ENCODE measurements at regions of chr10 and their contacts with region 1.

Region 1: DNA sequence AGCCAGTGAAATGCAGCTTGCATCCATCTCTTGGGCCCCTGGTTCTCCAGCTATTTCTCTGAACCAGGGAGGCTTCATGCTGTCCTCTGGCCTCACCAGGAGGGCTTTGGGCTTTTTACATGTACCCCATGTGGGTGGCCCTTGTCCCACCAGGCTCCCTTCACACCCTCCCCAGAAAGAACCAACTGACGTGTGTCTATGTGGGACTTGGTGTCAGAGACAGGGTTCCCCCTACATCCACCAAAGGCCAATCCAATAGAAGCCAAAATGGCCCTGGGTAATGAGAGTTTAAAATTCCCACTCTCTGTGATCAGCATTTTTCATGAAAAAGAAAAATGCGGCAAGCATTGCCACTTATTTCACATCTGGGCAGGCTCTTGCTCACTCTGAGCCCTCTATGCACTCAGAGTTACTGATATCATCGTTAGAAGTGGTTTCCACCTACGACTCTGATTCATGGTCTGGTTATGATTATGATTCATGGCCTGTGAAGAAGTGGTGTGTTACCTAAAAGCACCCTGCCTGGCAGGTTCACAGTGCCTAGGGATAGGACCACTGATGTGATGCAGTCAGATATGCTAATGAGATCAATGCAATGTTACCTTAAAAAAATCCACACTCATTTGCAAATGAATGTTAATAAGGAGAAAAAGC is 133.5 kb downstream of the BUB3 start:
- DNase-seq: peak; percentile 69
- H3K4me3 Mint-ChIP-seq: no peak overlapping the region
- H3K27ac Mint-ChIP-seq: peak overlapping the region; percentile 54
- H3K4me1 Mint-ChIP-seq: peaks cover 20% of the 10 kb centered on the region
- H3K27me3 Mint-ChIP-seq: peaks cover 8% of the 10 kb centered on the region

Region 2: GRCh38 chr10:123241391-123242141 is 46.2 kb before region 1 on chr10:
- CTCF ChIA-PET with region 1: no interaction called
- POLR2A ChIA-PET with region 1: no interaction called
- intact Hi-C with region 1: loop called (anchors 1 kb)
- DNase-seq: peak; percentile 52
- H3K4me3 Mint-ChIP-seq: no peak overlapping the region
- H3K27ac Mint-ChIP-seq: peak overlapping the region; percentile 82
- H3K4me1 Mint-ChIP-seq: peaks cover 24% of the 10 kb centered on the region
- H3K27me3 Mint-ChIP-seq: no peaks in the 10 kb centered on the region

Region 3: GRCh38 chr10:123427392-123427791 is 139.7 kb after region 1 on chr10:
- CTCF ChIA-PET with region 1: no interaction called
- POLR2A ChIA-PET with region 1: no interaction called
- intact Hi-C with region 1: no loop called
- DNase-seq: no peak
- H3K4me3 Mint-ChIP-seq: no peak overlapping the region
- H3K27ac Mint-ChIP-seq: no peak overlapping the region
- H3K4me1 Mint-ChIP-seq: no peaks in the 10 kb centered on the region
- H3K27me3 Mint-ChIP-seq: peaks cover 17% of the 10 kb centered on the region

Measured in activated CD4-positive, alpha-beta memory T cell treated with anti-CD3 and anti-CD28 coated beads for 36 hours (primary cell).